ENCODE measurements at regions of chr15 and their contacts with region 1.

Region 1: DNA sequence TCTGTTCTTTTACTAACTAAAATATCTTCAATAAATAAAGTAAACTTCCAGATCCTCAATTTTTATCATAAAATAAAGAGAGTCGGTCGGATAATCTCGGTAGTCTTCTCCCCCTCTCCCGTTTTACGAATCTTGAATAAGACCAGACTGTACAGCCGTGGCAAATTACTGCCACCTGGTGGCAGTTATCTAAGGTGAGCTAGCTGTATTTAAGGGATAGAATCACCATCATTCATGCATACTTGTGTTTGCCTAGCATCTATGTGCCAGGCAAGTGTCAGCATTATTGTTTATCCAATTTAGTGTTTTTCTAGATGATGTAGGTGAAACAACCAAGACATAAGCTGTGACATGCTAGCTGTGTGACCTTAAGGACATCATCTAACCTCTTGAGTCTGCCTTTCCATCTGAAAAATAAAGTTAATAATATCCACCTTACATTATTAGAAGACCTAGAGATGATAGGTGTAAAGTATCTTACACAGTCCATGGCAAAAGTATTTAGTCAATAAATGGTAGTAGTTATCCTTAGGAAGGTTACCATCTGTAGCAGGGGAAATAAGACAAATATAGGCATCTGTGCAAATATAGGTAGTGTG is 21.3 kb downstream of the DUT start:
- DNase-seq: peak; percentile 68
- ATAC-seq: peak; percentile 82
- H3K4me3 Mint-ChIP-seq: no peak overlapping the region
- H3K27ac Mint-ChIP-seq: no peak overlapping the region
- H3K4me1 Mint-ChIP-seq: peaks cover 2% of the 10 kb centered on the region
- H3K27me3 Mint-ChIP-seq: peaks cover 4% of the 10 kb centered on the region

Region 2: GRCh38 chr15:48221885-48222284 is 130.7 kb before region 1 on chr15:
- CTCF ChIA-PET with region 1: no interaction called
- POLR2A ChIA-PET with region 1: no interaction called
- DNase-seq: no peak
- ATAC-seq: no peak
- H3K4me3 Mint-ChIP-seq: no peak overlapping the region
- H3K27ac Mint-ChIP-seq: no peak overlapping the region
- H3K4me1 Mint-ChIP-seq: no peaks in the 10 kb centered on the region
- H3K27me3 Mint-ChIP-seq: peaks cover 8% of the 10 kb centered on the region

Region 3: GRCh38 chr15:48330855-48331795 is 21.4 kb before region 1 on chr15 and contains the start of gene DUT:
- CTCF ChIA-PET with region 1: interaction called, 64 read pairs
- POLR2A ChIA-PET with region 1: no interaction called
- DNase-seq: peak; percentile 86
- ATAC-seq: peak; percentile 87
- H3K4me3 Mint-ChIP-seq: peak within 1 kb of the TSS; percentile 92
- H3K27ac Mint-ChIP-seq: peak within 1 kb of the TSS; percentile 97
- H3K4me1 Mint-ChIP-seq: peaks cover 42% of the 10 kb centered on the region
- H3K27me3 Mint-ChIP-seq: no peaks in the 10 kb centered on the region
- total RNA-seq, gene DUT: 350 to 360 TPM

Region 4: GRCh38 chr15:48336940-48337339 is 15.6 kb before region 1 on chr15:
- CTCF ChIA-PET with region 1: interaction called, 64 read pairs
- POLR2A ChIA-PET with region 1: no interaction called
- DNase-seq: peak; percentile 46
- ATAC-seq: peak; percentile 58
- H3K4me3 Mint-ChIP-seq: no peak overlapping the region
- H3K27ac Mint-ChIP-seq: no peak overlapping the region
- H3K4me1 Mint-ChIP-seq: peaks cover 51% of the 10 kb centered on the region
- H3K27me3 Mint-ChIP-seq: no peaks in the 10 kb centered on the region